ENCODE measurements at regions of chr7 and their contacts with region 1.

Region 1: GRCh38 chr7:38369816-38370493 is 96.5 kb upstream of the TARP start:
- DNase-seq: peak; percentile 50 to 78 (median 66)
- H3K4me3 ChIP-seq: no peak overlapping the region
- H3K4me3 Mint-ChIP-seq: peak overlapping the region in 6 of 8 donors; percentile 30 to 70 (median 59)
- H3K27ac ChIP-seq: peak overlapping the region; percentile 33
- H3K27ac Mint-ChIP-seq: peak overlapping the region; percentile 24 to 96 (median 81)
- H3K4me1 ChIP-seq: peaks cover 62% of the 10 kb centered on the region
- H3K4me1 Mint-ChIP-seq: peaks cover 45 to 80% (median 54%) of the 10 kb centered on the region in 4 donors
- H3K27me3 ChIP-seq: no peaks in the 10 kb centered on the region
- H3K27me3 Mint-ChIP-seq: no peaks in the 10 kb centered on the region

Region 2: GRCh38 chr7:37674531-37674930 is 695.4 kb before region 1 on chr7:
- CTCF ChIA-PET with region 1: no interaction called
- POLR2A ChIA-PET with region 1: no interaction called
- intact Hi-C with region 1: no loop called
- DNase-seq: no peak
- H3K4me3 ChIP-seq: no peak overlapping the region
- H3K4me3 Mint-ChIP-seq: no peak overlapping the region
- H3K27ac ChIP-seq: no peak overlapping the region
- H3K27ac Mint-ChIP-seq: no peak overlapping the region
- H3K4me1 ChIP-seq: no peaks in the 10 kb centered on the region
- H3K4me1 Mint-ChIP-seq: no peaks in the 10 kb centered on the region
- H3K27me3 ChIP-seq: no peaks in the 10 kb centered on the region
- H3K27me3 Mint-ChIP-seq: peaks cover 0 to 2% of the 10 kb centered on the region in 2 donors

Region 3: GRCh38 chr7:38107486-38107893 is 262.5 kb before region 1 on chr7:
- CTCF ChIA-PET with region 1: interaction called, 148 read pairs
- POLR2A ChIA-PET with region 1: no interaction called
- intact Hi-C with region 1: loop called (anchors 1 kb)
- DNase-seq: peak; percentile 51 to 62 (median 54)
- H3K4me3 ChIP-seq: no peak overlapping the region
- H3K4me3 Mint-ChIP-seq: no peak overlapping the region
- H3K27ac ChIP-seq: no peak overlapping the region
- H3K27ac Mint-ChIP-seq: no peak overlapping the region
- H3K4me1 ChIP-seq: no peaks in the 10 kb centered on the region
- H3K4me1 Mint-ChIP-seq: peaks cover 0 to 2% (median 0%) of the 10 kb centered on the region in 4 donors
- H3K27me3 ChIP-seq: no peaks in the 10 kb centered on the region
- H3K27me3 Mint-ChIP-seq: peaks cover 13 to 15% of the 10 kb centered on the region in 2 donors

Region 4: DNA sequence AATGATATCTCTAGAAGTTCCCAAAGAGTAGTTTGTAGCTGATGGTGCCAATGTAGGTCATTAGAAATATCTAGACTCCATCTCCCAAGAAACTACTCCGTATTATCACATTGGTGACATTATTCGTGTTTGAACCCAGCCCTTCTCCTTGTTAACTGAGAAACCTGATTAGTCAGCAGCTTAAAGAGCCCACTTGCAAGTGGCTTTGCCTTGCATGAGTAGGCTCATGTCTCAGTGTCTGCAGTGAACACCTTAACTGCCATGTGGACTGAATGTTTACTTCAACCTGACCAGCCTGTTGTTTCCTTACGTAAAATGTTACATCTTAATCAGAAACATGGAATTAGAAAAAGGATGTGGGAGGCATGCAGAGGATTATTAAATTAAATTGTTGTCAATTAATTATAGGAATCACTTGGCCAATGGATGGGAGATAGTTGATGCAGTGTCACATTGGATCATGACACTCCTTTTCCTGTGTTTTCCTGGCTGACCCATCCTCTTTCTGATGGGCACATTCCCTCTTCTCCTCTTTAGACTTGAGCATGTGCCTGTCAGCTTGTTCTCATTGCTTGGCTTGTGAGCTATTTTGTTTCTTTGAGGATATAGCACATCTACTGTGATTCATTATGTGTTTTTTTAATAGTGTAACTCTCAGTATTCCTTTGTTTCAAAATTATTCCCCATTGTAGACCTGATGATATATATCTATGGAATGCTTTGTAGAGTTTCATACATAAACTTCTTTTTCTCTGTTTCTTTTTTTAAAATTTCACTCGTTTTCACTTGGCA is 174.0 kb before region 1 on chr7:
- CTCF ChIA-PET with region 1: interaction called, 58 read pairs
- POLR2A ChIA-PET with region 1: no interaction called
- intact Hi-C with region 1: no loop called
- DNase-seq: no peak
- H3K4me3 ChIP-seq: no peak overlapping the region
- H3K4me3 Mint-ChIP-seq: no peak overlapping the region
- H3K27ac ChIP-seq: no peak overlapping the region
- H3K27ac Mint-ChIP-seq: no peak overlapping the region
- H3K4me1 ChIP-seq: peaks cover 4% of the 10 kb centered on the region
- H3K4me1 Mint-ChIP-seq: peaks cover 17 to 35% (median 25%) of the 10 kb centered on the region in 4 donors
- H3K27me3 ChIP-seq: no peaks in the 10 kb centered on the region
- H3K27me3 Mint-ChIP-seq: no peaks in the 10 kb centered on the region

Region 5: GRCh38 chr7:38222481-38223096 is 147.4 kb before region 1 on chr7:
- CTCF ChIA-PET with region 1: interaction called, 758 read pairs
- POLR2A ChIA-PET with region 1: interaction called, 11 read pairs
- intact Hi-C with region 1: no loop called
- DNase-seq: peak in 4 of 5 donors; percentile 52 to 61 (median 58)
- H3K4me3 ChIP-seq: no peak overlapping the region
- H3K4me3 Mint-ChIP-seq: peak overlapping the region in 1 of 8 donors; percentile 1
- H3K27ac ChIP-seq: no peak overlapping the region
- H3K27ac Mint-ChIP-seq: peak overlapping the region in 6 of 7 donors; percentile 0 to 79 (median 53)
- H3K4me1 ChIP-seq: peaks cover 46% of the 10 kb centered on the region
- H3K4me1 Mint-ChIP-seq: peaks cover 20 to 68% (median 40%) of the 10 kb centered on the region in 4 donors
- H3K27me3 ChIP-seq: no peaks in the 10 kb centered on the region
- H3K27me3 Mint-ChIP-seq: no peaks in the 10 kb centered on the region

Region 6: GRCh38 chr7:38335492-38336147 is 34.3 kb before region 1 on chr7:
- CTCF ChIA-PET with region 1: interaction called, 79 read pairs
- POLR2A ChIA-PET with region 1: interaction called, 7 read pairs
- intact Hi-C with region 1: no loop called
- DNase-seq: peak; percentile 68 to 84 (median 74)
- H3K4me3 ChIP-seq: peak overlapping the region in 1 of 2 donors; percentile 18
- H3K4me3 Mint-ChIP-seq: peak overlapping the region; percentile 73 to 84 (median 79)
- H3K27ac ChIP-seq: peak overlapping the region; percentile 47
- H3K27ac Mint-ChIP-seq: peak overlapping the region; percentile 61 to 91 (median 87)
- H3K4me1 ChIP-seq: peaks cover 17% of the 10 kb centered on the region
- H3K4me1 Mint-ChIP-seq: peaks cover 16 to 53% (median 19%) of the 10 kb centered on the region in 4 donors
- H3K27me3 ChIP-seq: no peaks in the 10 kb centered on the region
- H3K27me3 Mint-ChIP-seq: no peaks in the 10 kb centered on the region

Region 7: GRCh38 chr7:38398725-38399321 is 28.9 kb after region 1 on chr7:
- CTCF ChIA-PET with region 1: interaction called, 10 read pairs
- POLR2A ChIA-PET with region 1: no interaction called
- intact Hi-C with region 1: no loop called
- DNase-seq: peak; percentile 41 to 54 (median 46)
- H3K4me3 ChIP-seq: no peak overlapping the region
- H3K4me3 Mint-ChIP-seq: no peak overlapping the region
- H3K27ac ChIP-seq: no peak overlapping the region
- H3K27ac Mint-ChIP-seq: no peak overlapping the region
- H3K4me1 ChIP-seq: no peaks in the 10 kb centered on the region
- H3K4me1 Mint-ChIP-seq: peaks cover 1 to 9% (median 7%) of the 10 kb centered on the region in 4 donors
- H3K27me3 ChIP-seq: no peaks in the 10 kb centered on the region
- H3K27me3 Mint-ChIP-seq: peaks cover 8 to 18% of the 10 kb centered on the region in 2 donors

Region 8: GRCh38 chr7:38492010-38492409 is 122.1 kb after region 1 on chr7:
- CTCF ChIA-PET with region 1: no interaction called
- POLR2A ChIA-PET with region 1: no interaction called
- intact Hi-C with region 1: no loop called
- DNase-seq: no peak
- H3K4me3 ChIP-seq: no peak overlapping the region
- H3K4me3 Mint-ChIP-seq: no peak overlapping the region
- H3K27ac ChIP-seq: no peak overlapping the region
- H3K27ac Mint-ChIP-seq: peak overlapping the region in 1 of 7 donors; percentile 3
- H3K4me1 ChIP-seq: no peaks in the 10 kb centered on the region
- H3K4me1 Mint-ChIP-seq: no peaks in the 10 kb centered on the region
- H3K27me3 ChIP-seq: no peaks in the 10 kb centered on the region
- H3K27me3 Mint-ChIP-seq: peaks cover 0 to 13% of the 10 kb centered on the region in 2 donors